ENCODE measurements at regions of chr5 and their contacts with region 1.

Region 1: GRCh38 chr5:131536211-131536826 is 98.7 kb downstream of the RAPGEF6 start:
- DNase-seq: no peak
- H3K4me3 Mint-ChIP-seq: peak overlapping the region; percentile 46
- H3K27ac Mint-ChIP-seq: peak overlapping the region; percentile 64
- H3K4me1 Mint-ChIP-seq: peaks cover 81% of the 10 kb centered on the region
- H3K27me3 Mint-ChIP-seq: no peaks in the 10 kb centered on the region

Region 2: DNA sequence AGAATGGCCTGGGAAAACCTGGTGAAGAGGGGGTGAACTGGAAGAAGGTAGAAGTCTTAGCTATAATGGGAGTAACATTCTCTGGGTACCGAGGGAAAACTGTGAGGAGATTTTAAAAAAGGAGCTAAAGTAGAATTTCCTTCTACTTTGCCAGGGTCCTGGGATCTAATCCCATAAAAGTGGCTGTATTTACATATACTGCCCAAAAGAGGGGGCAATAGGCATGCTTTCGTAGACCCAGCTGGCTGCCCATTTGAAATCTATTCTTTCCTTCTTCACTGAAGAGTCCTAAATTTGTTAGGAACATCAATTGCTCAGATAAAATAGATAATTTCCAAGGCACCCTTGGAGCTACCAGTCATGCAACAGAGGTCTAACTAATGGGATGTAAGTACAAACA is 113.3 kb before region 1 on chr5:
- intact Hi-C with region 1: no loop called
- DNase-seq: no peak
- H3K4me3 Mint-ChIP-seq: no peak overlapping the region
- H3K27ac Mint-ChIP-seq: no peak overlapping the region
- H3K4me1 Mint-ChIP-seq: peaks cover 6% of the 10 kb centered on the region
- H3K27me3 Mint-ChIP-seq: no peaks in the 10 kb centered on the region

Region 3: GRCh38 chr5:131488463-131488862 is 47.9 kb before region 1 on chr5:
- intact Hi-C with region 1: loop called (anchors 2 kb)
- DNase-seq: no peak
- H3K4me3 Mint-ChIP-seq: no peak overlapping the region
- H3K27ac Mint-ChIP-seq: no peak overlapping the region
- H3K4me1 Mint-ChIP-seq: peaks cover 16% of the 10 kb centered on the region
- H3K27me3 Mint-ChIP-seq: no peaks in the 10 kb centered on the region

Region 4: DNA sequence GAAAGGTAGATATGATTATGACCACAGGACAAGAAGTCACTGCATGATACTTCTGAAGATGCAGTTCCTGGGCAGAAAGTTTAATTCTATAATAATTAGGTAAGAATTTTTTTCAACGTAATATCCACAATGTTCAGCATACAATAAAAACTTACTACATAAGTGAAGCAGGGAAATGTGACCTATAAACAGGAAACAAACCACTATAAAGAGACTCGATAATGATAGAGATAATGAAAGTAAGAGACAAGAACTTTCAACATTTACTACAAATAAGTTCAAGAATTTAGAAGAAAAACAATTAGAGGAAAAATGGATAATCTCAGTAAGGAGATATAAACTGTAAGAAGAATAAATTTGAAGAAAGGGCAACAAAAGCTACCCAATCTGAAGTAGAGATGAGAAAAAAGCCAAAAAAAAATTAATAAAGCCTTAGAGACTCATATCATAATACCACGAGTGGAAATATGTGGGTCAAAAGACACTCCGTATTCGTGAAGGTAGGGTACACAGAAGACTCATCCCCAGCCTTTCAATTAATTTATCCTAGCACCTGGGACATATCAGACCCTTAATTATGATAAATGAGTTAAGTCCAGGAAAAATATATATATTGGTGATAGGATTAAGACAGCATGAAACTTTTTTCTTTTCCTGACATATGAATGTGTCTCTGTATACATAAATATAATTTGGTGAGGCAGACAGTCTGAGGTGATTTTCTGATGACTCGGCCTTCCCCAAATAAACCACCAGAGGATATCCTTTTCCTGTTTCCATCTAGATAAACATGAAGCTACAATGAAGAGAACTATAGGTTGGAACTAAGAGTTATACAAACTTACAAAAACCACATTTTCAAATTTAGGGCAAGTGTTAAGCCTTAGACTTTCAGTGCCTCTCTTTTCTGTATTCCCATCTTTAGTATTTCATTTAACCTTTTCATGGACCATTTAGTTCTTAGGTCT is 21.7 kb before region 1 on chr5:
- intact Hi-C with region 1: loop called (anchors 2 kb)
- DNase-seq: no peak
- H3K4me3 Mint-ChIP-seq: peak overlapping the region; percentile 83
- H3K27ac Mint-ChIP-seq: peak overlapping the region; percentile 80
- H3K4me1 Mint-ChIP-seq: peaks cover 38% of the 10 kb centered on the region
- H3K27me3 Mint-ChIP-seq: no peaks in the 10 kb centered on the region

Region 5: DNA sequence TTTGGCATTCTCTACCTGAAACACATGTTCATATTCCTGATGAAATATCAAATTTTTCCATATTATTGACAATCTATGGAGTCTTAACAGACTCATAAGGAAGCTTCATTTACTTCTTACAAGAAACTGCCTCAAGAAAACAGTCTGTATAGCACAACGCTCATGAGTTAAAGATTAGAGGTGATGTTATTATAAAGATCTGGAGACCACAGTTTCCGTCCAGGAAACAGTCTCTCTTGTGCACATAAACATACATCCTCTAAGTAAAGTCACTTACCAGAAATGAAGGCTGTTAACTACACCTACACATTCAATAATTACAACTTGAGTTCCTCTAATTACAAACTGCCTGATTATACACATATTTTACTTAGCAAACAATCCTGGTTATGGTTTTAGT is 11.9 kb after region 1 on chr5:
- intact Hi-C with region 1: loop called (anchors 1 kb)
- DNase-seq: peak; percentile 34
- H3K4me3 Mint-ChIP-seq: peak overlapping the region; percentile 94
- H3K27ac Mint-ChIP-seq: peak overlapping the region; percentile 92
- H3K4me1 Mint-ChIP-seq: peaks cover 68% of the 10 kb centered on the region
- H3K27me3 Mint-ChIP-seq: no peaks in the 10 kb centered on the region

Region 6: DNA sequence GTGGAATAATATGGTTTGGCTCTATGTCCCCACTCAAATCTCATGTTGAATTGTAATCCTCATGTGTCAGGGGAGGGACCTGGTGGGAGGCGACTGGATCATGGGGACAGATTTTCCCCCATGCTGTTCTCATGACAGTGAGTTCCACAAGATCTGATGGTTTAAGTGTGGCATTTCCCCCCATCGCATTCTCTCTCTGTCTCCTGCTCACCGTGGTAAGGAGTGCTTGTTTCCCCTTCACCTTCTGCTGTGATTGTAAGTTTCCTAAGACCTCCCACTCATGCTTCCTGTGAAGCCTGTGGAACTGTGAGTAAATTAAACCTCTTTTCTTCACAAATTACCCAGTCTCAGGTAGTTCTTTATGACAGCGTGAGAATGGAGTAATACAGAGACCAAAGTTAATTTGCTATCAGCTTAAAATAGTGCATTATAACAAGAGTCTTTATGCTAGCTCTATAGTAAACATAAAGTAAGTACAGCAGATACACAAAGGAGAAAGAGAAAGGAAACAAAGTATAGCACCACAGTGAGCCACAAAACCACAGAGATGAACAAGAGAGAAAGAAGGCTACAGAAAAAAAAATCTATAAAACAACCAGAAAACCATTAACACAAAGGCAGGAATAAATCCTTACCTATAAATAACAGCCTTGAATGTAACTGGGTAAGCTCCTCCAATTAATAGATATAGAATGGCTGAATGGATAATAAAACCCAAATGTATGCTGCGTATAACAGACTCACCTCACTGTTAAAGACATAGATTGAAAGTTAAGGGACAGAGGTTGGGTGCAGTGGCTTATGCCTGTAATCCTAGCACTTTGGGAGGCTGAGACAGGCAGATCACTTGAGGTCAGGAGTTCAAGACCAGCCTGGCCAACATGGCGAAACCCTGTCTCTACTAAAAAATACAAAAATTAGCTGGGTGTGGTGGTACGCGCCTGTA is 59.0 kb after region 1 on chr5:
- intact Hi-C with region 1: loop called (anchors 5 kb)
- DNase-seq: peak; percentile 19
- H3K4me3 Mint-ChIP-seq: peak overlapping the region; percentile 61
- H3K27ac Mint-ChIP-seq: peak overlapping the region; percentile 82
- H3K4me1 Mint-ChIP-seq: peaks cover 39% of the 10 kb centered on the region
- H3K27me3 Mint-ChIP-seq: no peaks in the 10 kb centered on the region

Region 7: GRCh38 chr5:131679913-131680312 is 143.6 kb after region 1 on chr5:
- intact Hi-C with region 1: no loop called
- DNase-seq: no peak
- H3K4me3 Mint-ChIP-seq: no peak overlapping the region
- H3K27ac Mint-ChIP-seq: no peak overlapping the region
- H3K4me1 Mint-ChIP-seq: peaks cover 26% of the 10 kb centered on the region
- H3K27me3 Mint-ChIP-seq: no peaks in the 10 kb centered on the region

Region 8: DNA sequence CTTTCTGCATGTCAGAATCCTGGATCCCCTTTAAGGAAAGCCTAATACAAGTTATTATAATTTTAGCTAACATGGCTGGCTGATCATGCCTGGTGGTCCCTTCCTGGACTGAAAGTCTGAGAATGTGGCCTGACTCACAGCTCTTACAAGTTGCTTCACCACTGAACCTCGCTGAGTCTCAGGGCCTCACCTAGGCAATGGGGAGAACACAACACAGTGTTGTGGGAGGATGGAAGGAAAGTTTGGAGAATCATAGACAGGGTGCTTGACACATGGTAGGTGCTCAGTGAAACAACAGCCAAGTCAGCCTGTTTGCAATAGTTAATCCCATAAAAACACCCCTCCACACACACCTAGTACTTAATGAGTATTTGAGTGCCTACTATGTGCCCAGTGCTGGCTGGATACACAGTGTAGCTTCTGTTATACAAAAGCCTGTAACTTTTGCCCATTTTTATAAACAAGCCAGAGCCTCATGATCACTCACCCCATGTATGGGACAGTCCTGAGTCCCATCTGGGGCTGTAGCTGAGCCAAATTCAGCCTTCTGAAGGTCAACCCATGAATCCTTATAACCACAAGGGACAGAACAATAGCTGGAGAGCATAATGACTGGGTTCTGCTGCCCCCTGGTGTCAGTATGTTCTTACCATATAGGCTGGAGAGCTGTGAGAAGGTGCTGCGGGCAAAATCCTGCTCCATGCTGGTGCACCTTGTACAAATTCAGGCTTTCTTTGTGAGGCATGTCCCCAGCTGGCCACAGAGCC is 471.3 kb after region 1 on chr5:
- intact Hi-C with region 1: loop called (anchors 5 kb)
- DNase-seq: peak; percentile 67
- H3K4me3 Mint-ChIP-seq: peak overlapping the region; percentile 7
- H3K27ac Mint-ChIP-seq: peak overlapping the region; percentile 35
- H3K4me1 Mint-ChIP-seq: peaks cover 44% of the 10 kb centered on the region
- H3K27me3 Mint-ChIP-seq: peaks cover 41% of the 10 kb centered on the region

Region 9: GRCh38 chr5:132094393-132095076 is 558.2 kb after region 1 on chr5:
- intact Hi-C with region 1: loop called (anchors 5 kb)
- DNase-seq: no peak
- H3K4me3 Mint-ChIP-seq: peak overlapping the region; percentile 8
- H3K27ac Mint-ChIP-seq: peak overlapping the region; percentile 90
- H3K4me1 Mint-ChIP-seq: peaks cover 80% of the 10 kb centered on the region
- H3K27me3 Mint-ChIP-seq: no peaks in the 10 kb centered on the region

Measured in activated T-helper 1 cell treated with anti-CD3 and anti-CD28 coated beads, Interleukin-12 subunit alpha, Interleukin-12 subunit beta, Interleukin-2, Interleukin-4 antibody, amounts not matched to agents 30 ng/mL and 10 ng/mL and 1 ng/mL, durations not matched to agents 14 hours and 24 hours and 36 hours (primary cell).